Heart right ventricle (tissue), 16 donors: ENCODE measurements at regions of chr1 and their contacts with region 1.

Region 1: GRCh38 chr1:119367427-119368124 is 1.0 kb upstream of the HAO2 start:
- DNase-seq: no peak
- ATAC-seq: peak in 2 of 8 donors; percentile 28 to 51
- H3K4me3 ChIP-seq: no peak overlapping the region
- H3K27ac ChIP-seq: no peak overlapping the region
- H3K4me1 ChIP-seq: no peaks in the 10 kb centered on the region
- H3K27me3 ChIP-seq: peaks cover 0 to 7% (median 0%) of the 10 kb centered on the region in 7 donors
- CTCF ChIP-seq: peak; percentile 60 to 82 (median 75)

Region 2: GRCh38 chr1:119275145-119276134 is 92.1 kb before region 1 on chr1:
- intact Hi-C with region 1: loop called in 6 of 10 experiments (anchors 1 to 10 kb)
- DNase-seq: peak in 1 of 2 donors; percentile 29
- ATAC-seq: peak in 3 of 8 donors; percentile 52 to 61 (median 61)
- H3K4me3 ChIP-seq: no peak overlapping the region
- H3K27ac ChIP-seq: no peak overlapping the region
- H3K4me1 ChIP-seq: peaks cover 0 to 6% (median 0%) of the 10 kb centered on the region in 9 donors
- H3K27me3 ChIP-seq: no peaks in the 10 kb centered on the region
- CTCF ChIP-seq: peak in 8 of 9 donors; percentile 38 to 83 (median 68)

Region 3: GRCh38 chr1:119286587-119287181 is 80.9 kb before region 1 on chr1:
- intact Hi-C with region 1: loop called in 5 of 10 experiments (anchors 5 to 10 kb)
- DNase-seq: no peak
- ATAC-seq: peak in 2 of 8 donors; percentile 38 to 39
- H3K4me3 ChIP-seq: no peak overlapping the region
- H3K27ac ChIP-seq: no peak overlapping the region
- H3K4me1 ChIP-seq: no peaks in the 10 kb centered on the region
- H3K27me3 ChIP-seq: no peaks in the 10 kb centered on the region
- CTCF ChIP-seq: peak in 7 of 9 donors; percentile 22 to 50 (median 37)